CD4-positive, alpha-beta memory T cell (primary cell): ENCODE measurements at regions of chr3 and their contacts with region 1.

Region 1: GRCh38 chr3:185176750-185177359 is 24.0 kb upstream of the C3orf70 start:
- DNase-seq: peak in 1 of 5 donors; percentile 4
- H3K4me3 ChIP-seq: no peak overlapping the region
- H3K4me3 Mint-ChIP-seq: no peak overlapping the region
- H3K27ac ChIP-seq: no peak overlapping the region
- H3K27ac Mint-ChIP-seq: no peak overlapping the region
- H3K4me1 ChIP-seq: no peaks in the 10 kb centered on the region
- H3K4me1 Mint-ChIP-seq: peaks cover 0 to 2% (median under 1%) of the 10 kb centered on the region in 4 donors
- H3K27me3 ChIP-seq: no peaks in the 10 kb centered on the region
- H3K27me3 Mint-ChIP-seq: peaks cover 2% of the 10 kb centered on the region in 2 donors

Region 2: GRCh38 chr3:184977796-184978195 is 199.1 kb before region 1 on chr3:
- CTCF ChIA-PET with region 1: no interaction called
- POLR2A ChIA-PET with region 1: no interaction called
- intact Hi-C with region 1: no loop called
- DNase-seq: no peak
- H3K4me3 ChIP-seq: no peak overlapping the region
- H3K4me3 Mint-ChIP-seq: no peak overlapping the region
- H3K27ac ChIP-seq: no peak overlapping the region
- H3K27ac Mint-ChIP-seq: no peak overlapping the region
- H3K4me1 ChIP-seq: no peaks in the 10 kb centered on the region
- H3K4me1 Mint-ChIP-seq: peaks cover 0 to 13% (median 7%) of the 10 kb centered on the region in 4 donors
- H3K27me3 ChIP-seq: no peaks in the 10 kb centered on the region
- H3K27me3 Mint-ChIP-seq: no peaks in the 10 kb centered on the region

Region 3: GRCh38 chr3:185164428-185165217 is 12.2 kb before region 1 on chr3:
- CTCF ChIA-PET with region 1: interaction called, 10 read pairs
- POLR2A ChIA-PET with region 1: no interaction called
- intact Hi-C with region 1: no loop called
- DNase-seq: no peak
- H3K4me3 ChIP-seq: no peak overlapping the region
- H3K4me3 Mint-ChIP-seq: no peak overlapping the region
- H3K27ac ChIP-seq: no peak overlapping the region
- H3K27ac Mint-ChIP-seq: no peak overlapping the region
- H3K4me1 ChIP-seq: no peaks in the 10 kb centered on the region
- H3K4me1 Mint-ChIP-seq: no peaks in the 10 kb centered on the region
- H3K27me3 ChIP-seq: no peaks in the 10 kb centered on the region
- H3K27me3 Mint-ChIP-seq: peaks cover 3 to 8% of the 10 kb centered on the region in 2 donors